Activated T-helper 1 cell treated with anti-CD3 and anti-CD28 coated beads, Interleukin-12 subunit alpha, Interleukin-12 subunit beta, Interleukin-2, Interleukin-4 antibody, amounts not matched to agents 30 ng/mL and 10 ng/mL and 1 ng/mL, durations not matched to agents 14 hours and 24 hours and 36 hours (primary cell): ENCODE measurements at regions of chr10 and their contacts with region 1.

Region 1: GRCh38 chr10:102280397-102281101 is 35.2 kb downstream of the GBF1 start:
- DNase-seq: no peak
- H3K4me3 Mint-ChIP-seq: peak overlapping the region; percentile 28
- H3K27ac Mint-ChIP-seq: peak overlapping the region; percentile 37
- H3K4me1 Mint-ChIP-seq: peaks cover 60% of the 10 kb centered on the region
- H3K27me3 Mint-ChIP-seq: no peaks in the 10 kb centered on the region

Region 2: GRCh38 chr10:102268375-102268888 is 12.1 kb before region 1 on chr10:
- intact Hi-C with region 1: loop called (anchors 2 kb)
- DNase-seq: no peak
- H3K4me3 Mint-ChIP-seq: no peak overlapping the region
- H3K27ac Mint-ChIP-seq: peak overlapping the region; percentile 71
- H3K4me1 Mint-ChIP-seq: peaks cover 32% of the 10 kb centered on the region
- H3K27me3 Mint-ChIP-seq: no peaks in the 10 kb centered on the region

Region 3: GRCh38 chr10:102334101-102334500 is 53.6 kb after region 1 on chr10:
- intact Hi-C with region 1: loop called (anchors 10 kb)
- DNase-seq: no peak
- H3K4me3 Mint-ChIP-seq: no peak overlapping the region
- H3K27ac Mint-ChIP-seq: no peak overlapping the region
- H3K4me1 Mint-ChIP-seq: no peaks in the 10 kb centered on the region
- H3K27me3 Mint-ChIP-seq: no peaks in the 10 kb centered on the region